ENCODE measurements at regions of chr9 and their contacts with region 1.

Region 1: DNA sequence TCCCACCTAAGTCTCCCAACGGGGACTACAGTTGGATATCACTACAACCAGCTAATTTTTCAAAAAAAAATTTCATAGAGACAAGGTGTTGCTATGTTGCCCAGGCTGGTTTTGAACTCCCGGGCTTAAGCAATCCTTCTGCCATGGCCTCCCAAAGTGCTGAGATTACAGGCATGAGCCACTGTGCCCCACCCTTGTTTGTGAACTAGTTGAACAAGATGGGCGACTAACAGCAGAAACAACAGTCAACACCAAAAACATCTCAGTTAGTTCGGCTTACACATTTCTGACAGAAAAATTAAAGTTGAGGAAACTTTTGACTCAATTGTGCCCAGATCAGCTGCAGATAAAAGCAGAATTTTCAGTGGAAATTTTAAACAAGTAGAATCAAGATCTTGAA is 470.0 kb downstream of the TLE4 start:
- DNase-seq: no peak
- ATAC-seq: no peak
- H3K4me3 ChIP-seq: no peak overlapping the region
- H3K27ac ChIP-seq: no peak overlapping the region
- H3K4me1 ChIP-seq: peaks cover 0 to 3% (median 0%) of the 10 kb centered on the region in 12 donors
- H3K27me3 ChIP-seq: peaks cover 0 to 5% (median 0%) of the 10 kb centered on the region in 9 donors
- CTCF ChIP-seq: no peak
- POLR2A ChIP-seq: no peak

Region 2: DNA sequence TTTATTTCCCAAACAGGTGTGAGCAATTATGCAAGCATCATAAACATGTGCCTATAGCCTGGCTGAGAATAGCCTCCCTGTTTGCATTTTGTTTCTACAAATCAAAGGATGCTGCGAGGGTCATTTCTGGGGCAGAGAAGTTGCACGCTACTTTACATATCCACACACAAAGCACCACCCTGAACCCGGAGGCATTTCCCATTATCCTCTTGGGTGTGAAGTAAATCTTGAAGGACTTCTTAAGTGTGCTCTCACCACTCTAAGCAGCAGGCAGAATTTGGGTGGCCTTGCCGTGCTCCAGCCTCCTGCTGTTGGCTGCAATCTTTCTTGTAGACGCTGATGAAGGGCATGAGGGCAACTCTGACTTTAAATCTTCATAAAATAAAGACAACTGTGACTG is 594.0 kb before region 1 on chr9:
- intact Hi-C with region 1: no loop called
- DNase-seq: no peak
- ATAC-seq: no peak
- H3K4me3 ChIP-seq: no peak overlapping the region
- H3K27ac ChIP-seq: no peak overlapping the region
- H3K4me1 ChIP-seq: no peaks in the 10 kb centered on the region
- H3K27me3 ChIP-seq: no peaks in the 10 kb centered on the region
- CTCF ChIP-seq: no peak
- POLR2A ChIP-seq: no peak

Region 3: DNA sequence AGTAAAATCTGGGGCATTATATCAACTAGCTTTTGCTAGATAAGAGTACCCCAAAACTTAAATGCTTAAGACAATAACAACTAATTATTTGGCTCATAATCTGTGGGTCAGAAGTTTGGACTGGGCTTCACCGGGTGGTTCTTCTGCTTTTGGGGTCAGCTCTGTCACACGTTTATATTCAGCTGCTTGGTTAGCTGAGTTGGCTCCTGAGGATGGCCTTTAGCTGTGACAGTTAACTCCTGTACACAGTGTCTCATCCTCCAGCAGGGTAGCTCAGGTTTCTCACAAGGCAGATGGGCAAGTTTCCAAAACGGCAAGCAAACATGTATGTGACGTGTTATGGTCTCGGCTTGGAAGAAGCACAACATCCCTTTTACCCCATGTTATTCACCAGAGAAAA is 18.2 kb after region 1 on chr9:
- intact Hi-C with region 1: loop called in 1 of 10 experiments (anchors 1 kb)
- DNase-seq: no peak
- ATAC-seq: no peak
- H3K4me3 ChIP-seq: no peak overlapping the region
- H3K27ac ChIP-seq: no peak overlapping the region
- H3K4me1 ChIP-seq: peaks cover 0 to 7% (median 0%) of the 10 kb centered on the region in 12 donors
- H3K27me3 ChIP-seq: no peaks in the 10 kb centered on the region
- CTCF ChIP-seq: no peak
- POLR2A ChIP-seq: no peak